A549 (cell line): ENCODE measurements at regions of chr17 and their contacts with region 1.

Region 1: GRCh38 chr17:55527540-55528118 is 16.4 kb upstream of the SMIM36 start:
- DNase-seq: peak; percentile 50 to 71
- ATAC-seq: peak; percentile 84 to 86
- H3K4me3 ChIP-seq: no peak overlapping the region
- H3K27ac ChIP-seq: no peak overlapping the region; a peak in 1 of 6 replicates
- H3K4me1 ChIP-seq: no peaks in the 10 kb centered on the region
- CTCF ChIP-seq: peak; percentile 96
- EP300 ChIP-seq: no peak
- POLR2A ChIP-seq: no peak
- RAD21 ChIP-seq: peak; percentile 94 to 99

Region 2: GRCh38 chr17:55366020-55366481 is 161.6 kb before region 1 on chr17:
- CTCF ChIA-PET with region 1: interaction called, 13 read pairs
- POLR2A ChIA-PET with region 1: no interaction called
- DNase-seq: no peak
- ATAC-seq: no peak
- H3K4me3 ChIP-seq: no peak overlapping the region
- H3K27ac ChIP-seq: no peak overlapping the region
- H3K4me1 ChIP-seq: no peaks in the 10 kb centered on the region
- CTCF ChIP-seq: no peak
- EP300 ChIP-seq: no peak
- POLR2A ChIP-seq: no peak
- RAD21 ChIP-seq: no peak

Region 3: GRCh38 chr17:55555772-55556171 is 28.1 kb after region 1 on chr17:
- CTCF ChIA-PET with region 1: interaction called, 11 read pairs
- POLR2A ChIA-PET with region 1: no interaction called
- DNase-seq: no peak
- ATAC-seq: peak in 1 of 2 experiments; percentile 34; a peak in 2 of 6 replicates
- H3K4me3 ChIP-seq: no peak overlapping the region
- H3K27ac ChIP-seq: no peak overlapping the region
- H3K4me1 ChIP-seq: no peaks in the 10 kb centered on the region
- CTCF ChIP-seq: no peak
- EP300 ChIP-seq: no peak
- POLR2A ChIP-seq: no peak
- RAD21 ChIP-seq: no peak

Region 4: DNA sequence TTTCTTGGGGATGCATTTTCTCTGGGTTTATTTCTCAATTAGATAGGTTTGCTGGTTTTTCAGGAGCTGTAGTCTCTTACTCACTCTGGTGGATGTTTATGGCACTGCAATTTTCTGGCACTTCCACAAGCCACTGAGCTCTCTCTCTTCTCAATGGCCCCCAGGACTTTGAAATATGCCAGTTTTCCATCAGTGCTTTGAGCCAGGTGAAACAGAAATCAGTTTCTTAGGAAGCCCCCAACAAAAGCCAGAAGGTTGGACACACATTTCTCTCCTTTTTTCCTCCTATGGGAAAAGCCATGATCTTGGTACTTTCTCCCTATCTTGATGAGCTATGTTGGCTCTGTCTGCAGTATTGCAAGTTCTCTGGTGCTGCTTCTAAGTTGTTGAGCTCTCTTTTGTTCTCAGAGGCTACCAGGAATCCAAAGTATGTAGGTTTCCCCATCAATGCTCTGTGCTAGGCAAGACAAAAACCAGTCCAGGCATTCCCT is 74.3 kb after region 1 on chr17:
- CTCF ChIA-PET with region 1: interaction called, 313 read pairs
- POLR2A ChIA-PET with region 1: no interaction called
- DNase-seq: peak; percentile 40 to 60
- ATAC-seq: peak; percentile 73 to 89; a peak in 5 of 6 replicates
- H3K4me3 ChIP-seq: no peak overlapping the region
- H3K27ac ChIP-seq: no peak overlapping the region
- H3K4me1 ChIP-seq: peaks cover 2% of the 10 kb centered on the region; the same call in 2 of the 3 replicates
- CTCF ChIP-seq: peak; percentile 83
- EP300 ChIP-seq: no peak
- POLR2A ChIP-seq: no peak
- RAD21 ChIP-seq: peak; percentile 91 to 93

Region 5: GRCh38 chr17:55735731-55736405 is 208.2 kb after region 1 on chr17:
- CTCF ChIA-PET with region 1: interaction called, 359 read pairs
- POLR2A ChIA-PET with region 1: no interaction called
- DNase-seq: peak; percentile 30 to 72
- ATAC-seq: peak; percentile 52 to 79; a peak in 3 of 6 replicates
- H3K4me3 ChIP-seq: no peak overlapping the region
- H3K27ac ChIP-seq: no peak overlapping the region
- H3K4me1 ChIP-seq: no peaks in the 10 kb centered on the region
- CTCF ChIP-seq: peak; percentile 86
- EP300 ChIP-seq: no peak
- POLR2A ChIP-seq: no peak
- RAD21 ChIP-seq: peak; percentile 56 to 58

Region 6: GRCh38 chr17:55783684-55784245 is 256.1 kb after region 1 on chr17:
- CTCF ChIA-PET with region 1: interaction called, 45 read pairs
- POLR2A ChIA-PET with region 1: no interaction called
- DNase-seq: no peak
- ATAC-seq: no peak
- H3K4me3 ChIP-seq: no peak overlapping the region
- H3K27ac ChIP-seq: no peak overlapping the region
- H3K4me1 ChIP-seq: no peaks in the 10 kb centered on the region
- CTCF ChIP-seq: no peak
- EP300 ChIP-seq: no peak
- POLR2A ChIP-seq: no peak
- RAD21 ChIP-seq: no peak

Region 7: DNA sequence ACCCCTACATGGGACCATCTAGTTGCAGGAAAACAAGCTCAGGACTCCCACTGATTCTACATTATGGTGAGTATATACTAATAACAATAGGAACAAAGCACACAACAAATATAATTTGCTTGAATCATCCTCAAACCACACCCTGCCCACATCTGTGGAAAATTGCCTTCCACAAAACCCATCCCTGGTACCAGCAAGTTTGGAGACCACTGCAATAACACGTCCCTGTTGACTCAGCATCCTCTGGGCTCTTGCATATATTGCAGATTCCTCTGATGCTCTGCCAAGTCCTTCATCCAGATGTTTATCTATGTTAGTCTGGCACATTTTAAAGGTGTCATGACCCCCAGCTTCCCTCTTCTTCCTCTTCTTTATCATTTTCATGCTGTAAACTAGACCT is 361.6 kb after region 1 on chr17:
- CTCF ChIA-PET with region 1: no interaction called
- POLR2A ChIA-PET with region 1: no interaction called
- DNase-seq: no peak
- ATAC-seq: no peak
- H3K4me3 ChIP-seq: no peak overlapping the region
- H3K27ac ChIP-seq: no peak overlapping the region
- H3K4me1 ChIP-seq: no peaks in the 10 kb centered on the region
- CTCF ChIP-seq: no peak
- EP300 ChIP-seq: no peak
- POLR2A ChIP-seq: no peak
- RAD21 ChIP-seq: no peak